ENCODE measurements at regions of chr6 and their contacts with region 1.

Region 1: GRCh38 chr6:7518853-7519252 is 22.6 kb upstream of the DSP start:
- DNase-seq: no peak
- H3K4me3 ChIP-seq: no peak overlapping the region
- H3K27ac ChIP-seq: no peak overlapping the region
- H3K4me1 ChIP-seq: peaks cover 11% of the 10 kb centered on the region
- CTCF ChIP-seq: no peak

Region 2: DNA sequence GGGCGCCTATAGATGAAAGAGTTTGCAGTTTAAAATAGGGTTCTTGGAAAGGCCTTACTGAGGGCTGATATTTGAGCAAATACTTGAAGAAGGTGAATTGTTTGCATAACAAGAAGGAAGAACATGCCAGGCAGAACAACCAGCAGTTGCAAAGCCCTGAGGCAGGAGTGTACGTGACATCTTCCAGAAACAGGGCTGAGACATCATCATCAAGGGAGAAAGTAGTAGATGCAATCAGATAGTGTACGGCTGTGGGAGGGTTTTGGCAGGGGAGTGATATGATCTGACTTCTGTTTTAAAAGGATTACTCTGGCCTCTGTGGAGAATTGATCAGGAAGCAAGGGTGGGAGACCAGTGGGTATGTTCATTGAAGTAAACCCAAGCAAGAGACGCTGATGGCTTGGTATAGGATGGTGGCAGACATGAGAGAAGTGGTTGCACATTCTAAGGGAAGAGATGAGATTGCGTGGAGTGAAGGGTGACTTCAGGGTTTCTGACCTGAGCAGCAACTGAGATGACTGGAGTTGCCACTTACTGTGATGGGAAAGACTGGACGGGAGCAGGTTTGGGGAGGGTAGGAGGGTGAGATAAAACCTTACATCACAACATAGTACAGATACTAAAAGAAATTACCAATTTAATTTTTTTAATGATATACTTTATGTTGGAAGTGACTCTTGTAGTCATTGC is 100.5 kb before region 1 on chr6:
- CTCF ChIA-PET with region 1: no interaction called
- POLR2A ChIA-PET with region 1: interaction called, 10 read pairs
- intact Hi-C with region 1: no loop called
- DNase-seq: no peak
- H3K4me3 ChIP-seq: no peak overlapping the region
- H3K27ac ChIP-seq: no peak overlapping the region
- H3K4me1 ChIP-seq: no peaks in the 10 kb centered on the region
- CTCF ChIP-seq: no peak

Region 3: GRCh38 chr6:7727946-7728854 is 209.3 kb after region 1 on chr6:
- CTCF ChIA-PET with region 1: no interaction called
- POLR2A ChIA-PET with region 1: no interaction called
- intact Hi-C with region 1: no loop called
- DNase-seq: peak; percentile 22
- H3K4me3 ChIP-seq: peak overlapping the region; percentile 36
- H3K27ac ChIP-seq: no peak overlapping the region
- H3K4me1 ChIP-seq: peaks cover 19% of the 10 kb centered on the region
- CTCF ChIP-seq: no peak

Measured in OCI-LY7 (cell line).